CD8-positive, alpha-beta memory T cell (primary cell): ENCODE measurements at regions of chr4 and their contacts with region 1.

Region 1: GRCh38 chr4:185608185-185608584 is 72.9 kb upstream of the PDLIM3 start:
- DNase-seq: no peak
- H3K4me3 ChIP-seq: no peak overlapping the region
- H3K4me3 Mint-ChIP-seq: no peak overlapping the region
- H3K27ac ChIP-seq: no peak overlapping the region
- H3K27ac Mint-ChIP-seq: no peak overlapping the region
- H3K4me1 ChIP-seq: no peaks in the 10 kb centered on the region
- H3K4me1 Mint-ChIP-seq: peaks cover 0 to 5% (median 0%) of the 10 kb centered on the region in 3 donors
- H3K27me3 ChIP-seq: no peaks in the 10 kb centered on the region
- H3K27me3 Mint-ChIP-seq: peaks cover 5 to 12% of the 10 kb centered on the region in 2 donors

Region 2: DNA sequence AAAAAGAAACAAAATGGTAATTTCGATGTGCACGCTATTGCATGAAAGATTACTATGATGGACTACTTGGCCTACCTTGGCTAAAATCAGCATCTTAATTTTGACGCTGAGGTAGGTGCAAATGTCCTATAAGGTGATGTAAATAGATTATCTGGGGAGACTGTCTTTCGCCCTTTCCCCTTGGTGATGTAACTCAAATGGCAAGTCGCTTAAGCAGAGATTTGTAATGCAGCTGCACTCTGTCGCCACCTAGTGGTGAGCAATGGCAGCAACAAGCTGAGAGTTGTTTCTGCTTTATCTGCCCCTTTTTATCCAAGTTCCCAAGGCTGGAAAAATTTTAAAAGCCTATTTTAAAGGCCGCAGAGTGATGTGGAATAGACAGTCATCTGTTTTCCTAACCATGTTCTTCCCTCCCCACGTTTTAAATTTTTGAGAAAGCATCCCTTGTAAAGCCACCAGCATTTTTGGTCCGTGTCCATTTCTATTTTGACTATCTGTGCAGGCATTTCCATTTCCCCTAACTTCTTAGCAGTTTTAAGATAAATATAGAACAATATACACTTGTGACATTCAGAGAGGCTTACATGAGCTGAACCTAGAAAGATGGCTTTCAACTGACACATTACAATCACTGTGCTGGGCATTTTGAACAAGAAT is 10.5 kb before region 1 on chr4:
- CTCF ChIA-PET with region 1: interaction called, 14 read pairs
- POLR2A ChIA-PET with region 1: no interaction called
- DNase-seq: peak; percentile 34 to 72 (median 49)
- H3K4me3 ChIP-seq: no peak overlapping the region
- H3K4me3 Mint-ChIP-seq: no peak overlapping the region
- H3K27ac ChIP-seq: no peak overlapping the region
- H3K27ac Mint-ChIP-seq: no peak overlapping the region
- H3K4me1 ChIP-seq: no peaks in the 10 kb centered on the region
- H3K4me1 Mint-ChIP-seq: no peaks in the 10 kb centered on the region
- H3K27me3 ChIP-seq: no peaks in the 10 kb centered on the region
- H3K27me3 Mint-ChIP-seq: peaks cover 2 to 43% of the 10 kb centered on the region in 2 donors